ENCODE measurements at regions of chr14 and their contacts with region 1.

Region 1: DNA sequence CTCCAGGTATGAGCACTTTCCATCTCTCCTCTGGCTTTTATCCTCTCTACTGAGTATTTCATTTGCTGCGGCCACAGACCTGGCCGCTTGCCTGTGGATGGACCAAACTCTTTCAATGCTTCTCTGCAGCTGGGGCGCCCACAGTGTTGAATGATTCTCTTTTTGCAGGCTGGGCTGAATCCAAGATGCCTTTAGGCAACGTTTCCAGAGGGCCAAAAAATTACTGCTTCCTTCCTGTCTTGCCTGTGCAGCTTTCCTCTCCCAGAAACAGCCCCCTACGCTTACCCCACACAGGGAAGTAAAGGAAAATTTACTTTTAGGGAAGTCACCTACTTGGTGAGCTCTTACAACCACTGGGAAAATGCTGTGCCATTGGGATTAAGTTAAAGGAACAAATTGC is 55.6 kb upstream of the JDP2 start:
- DNase-seq: peak in 2 of 5 donors; percentile 39 to 43
- ATAC-seq: peak in 2 of 4 donors; percentile 30 to 32
- H3K4me3 ChIP-seq: no peak overlapping the region
- H3K27ac ChIP-seq: no peak overlapping the region
- H3K4me1 ChIP-seq: peaks cover 0 to 23% (median 1%) of the 10 kb centered on the region in 12 donors
- H3K27me3 ChIP-seq: no peaks in the 10 kb centered on the region
- CTCF ChIP-seq: no peak
- POLR2A ChIP-seq: no peak

Region 2: DNA sequence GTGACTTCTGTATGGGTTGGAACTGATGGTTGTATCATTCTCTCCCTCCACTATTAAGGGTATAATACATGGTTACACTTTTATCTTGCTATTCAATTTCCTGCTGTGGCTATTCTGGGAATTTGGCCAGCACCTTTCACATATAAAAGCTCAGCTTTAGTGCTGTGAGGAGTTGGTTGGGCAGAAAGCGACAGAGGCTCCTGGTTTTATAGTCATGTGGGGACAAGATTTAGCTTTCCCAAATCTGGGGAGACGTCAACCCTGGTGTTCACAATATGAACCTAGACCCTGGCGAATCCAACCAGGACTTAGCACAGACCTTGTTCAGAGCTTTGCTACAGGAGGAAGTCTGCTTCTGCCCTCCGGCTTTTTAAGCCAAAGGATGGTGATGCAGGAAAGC is 57.1 kb before region 1 on chr14:
- intact Hi-C with region 1: loop called in 1 of 10 experiments (anchors 5 kb)
- DNase-seq: no peak
- ATAC-seq: peak in 3 of 4 donors; percentile 39 to 57 (median 40)
- H3K4me3 ChIP-seq: peak overlapping the region in 1 of 12 donors; percentile 15
- H3K27ac ChIP-seq: peak overlapping the region in 7 of 12 donors; percentile 11 to 67 (median 48)
- H3K4me1 ChIP-seq: peaks cover 0 to 36% (median 21%) of the 10 kb centered on the region in 12 donors
- H3K27me3 ChIP-seq: no peaks in the 10 kb centered on the region
- CTCF ChIP-seq: no peak
- POLR2A ChIP-seq: no peak